Activated T-helper 1 cell treated with anti-CD3 and anti-CD28 coated beads, Interleukin-12 subunit alpha, Interleukin-12 subunit beta, Interleukin-2, Interleukin-4 antibody, amounts not matched to agents 30 ng/mL and 10 ng/mL and 1 ng/mL, durations not matched to agents 14 hours and 24 hours and 36 hours (primary cell): ENCODE measurements at regions of chr9 and their contacts with region 1.

Region 1: GRCh38 chr9:20622330-20623020 is at the start of gene MLLT3:
- DNase-seq: peak; percentile 97
- H3K4me3 Mint-ChIP-seq: peak within 1 kb of the TSS; percentile 88
- H3K27ac Mint-ChIP-seq: peak within 1 kb of the TSS; percentile 99
- H3K4me1 Mint-ChIP-seq: peaks cover 52% of the 10 kb centered on the region
- H3K27me3 Mint-ChIP-seq: no peaks in the 10 kb centered on the region
- total RNA-seq, gene MLLT3: 33.8 and 36.4 TPM in 2 replicates

Region 2: DNA sequence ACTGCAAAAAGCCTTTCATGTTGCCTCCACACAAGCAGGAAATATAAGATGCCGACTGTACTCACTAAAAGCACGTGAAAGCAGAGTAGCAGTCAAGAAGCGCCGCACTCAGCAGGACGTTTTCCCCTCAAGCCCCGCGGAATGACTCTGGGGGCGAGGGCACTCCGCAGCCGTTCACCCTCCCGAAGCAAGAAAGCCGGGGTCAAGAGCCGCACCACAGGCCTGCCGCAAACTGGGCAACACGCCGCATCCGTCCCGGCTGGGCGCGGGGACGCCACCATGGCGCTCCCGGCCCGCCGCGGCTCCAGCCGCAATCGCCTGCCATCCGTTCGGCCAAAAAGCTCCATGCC is 1242.8 kb before region 1 on chr9:
- intact Hi-C with region 1: loop called (anchors 5 kb)
- DNase-seq: no peak
- H3K4me3 Mint-ChIP-seq: peak overlapping the region; percentile 98
- H3K27ac Mint-ChIP-seq: peak overlapping the region; percentile 98
- H3K4me1 Mint-ChIP-seq: peaks cover 61% of the 10 kb centered on the region
- H3K27me3 Mint-ChIP-seq: no peaks in the 10 kb centered on the region

Region 3: GRCh38 chr9:19999491-20000057 is 622.9 kb before region 1 on chr9:
- intact Hi-C with region 1: loop called (anchors 1 kb)
- DNase-seq: peak; percentile 62
- H3K4me3 Mint-ChIP-seq: peak overlapping the region; percentile 63
- H3K27ac Mint-ChIP-seq: peak overlapping the region; percentile 99
- H3K4me1 Mint-ChIP-seq: peaks cover 66% of the 10 kb centered on the region
- H3K27me3 Mint-ChIP-seq: no peaks in the 10 kb centered on the region

Region 4: DNA sequence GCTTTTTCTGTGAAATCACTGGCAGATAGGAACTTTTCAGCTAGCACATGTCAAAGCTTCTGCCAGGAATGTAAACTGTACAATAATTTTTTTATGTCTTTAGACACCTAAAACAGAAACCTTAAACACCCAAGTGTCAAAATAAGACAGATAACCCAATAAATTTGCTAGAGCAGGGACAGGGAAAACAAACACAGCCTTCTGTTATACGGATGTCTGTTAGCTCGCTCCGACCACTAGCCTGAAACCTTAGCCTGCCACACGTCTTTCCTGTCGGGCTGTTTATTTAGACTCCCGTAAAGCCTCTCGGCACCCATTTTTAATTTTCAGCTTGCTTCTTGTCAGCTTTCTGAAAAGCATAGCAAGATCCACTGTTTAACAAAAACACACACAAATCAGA is 478.3 kb before region 1 on chr9:
- intact Hi-C with region 1: no loop called
- DNase-seq: no peak
- H3K4me3 Mint-ChIP-seq: peak overlapping the region; percentile 41
- H3K27ac Mint-ChIP-seq: no peak overlapping the region
- H3K4me1 Mint-ChIP-seq: peaks cover 15% of the 10 kb centered on the region
- H3K27me3 Mint-ChIP-seq: no peaks in the 10 kb centered on the region

Region 5: DNA sequence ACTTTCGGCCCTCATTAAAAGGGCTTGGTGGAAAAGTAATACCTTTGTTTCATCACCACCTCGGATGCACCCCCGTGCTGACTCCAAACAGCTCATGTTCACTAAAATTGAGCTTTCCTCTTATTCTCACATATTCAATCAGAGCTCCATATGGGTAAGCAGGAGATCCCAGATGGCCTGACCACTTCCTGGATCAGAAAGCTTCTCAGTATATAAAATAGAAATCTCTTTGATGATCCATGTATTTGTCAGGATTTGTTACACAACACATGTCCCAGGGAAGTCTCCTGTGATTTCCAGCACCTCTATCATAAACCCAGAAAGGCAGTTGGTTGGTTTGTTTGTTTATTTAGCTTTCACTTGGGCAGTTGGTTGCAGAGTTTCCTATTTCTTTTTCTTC is 402.2 kb before region 1 on chr9:
- intact Hi-C with region 1: no loop called
- DNase-seq: no peak
- H3K4me3 Mint-ChIP-seq: no peak overlapping the region
- H3K27ac Mint-ChIP-seq: no peak overlapping the region
- H3K4me1 Mint-ChIP-seq: peaks cover 18% of the 10 kb centered on the region
- H3K27me3 Mint-ChIP-seq: peaks cover 5% of the 10 kb centered on the region

Region 6: DNA sequence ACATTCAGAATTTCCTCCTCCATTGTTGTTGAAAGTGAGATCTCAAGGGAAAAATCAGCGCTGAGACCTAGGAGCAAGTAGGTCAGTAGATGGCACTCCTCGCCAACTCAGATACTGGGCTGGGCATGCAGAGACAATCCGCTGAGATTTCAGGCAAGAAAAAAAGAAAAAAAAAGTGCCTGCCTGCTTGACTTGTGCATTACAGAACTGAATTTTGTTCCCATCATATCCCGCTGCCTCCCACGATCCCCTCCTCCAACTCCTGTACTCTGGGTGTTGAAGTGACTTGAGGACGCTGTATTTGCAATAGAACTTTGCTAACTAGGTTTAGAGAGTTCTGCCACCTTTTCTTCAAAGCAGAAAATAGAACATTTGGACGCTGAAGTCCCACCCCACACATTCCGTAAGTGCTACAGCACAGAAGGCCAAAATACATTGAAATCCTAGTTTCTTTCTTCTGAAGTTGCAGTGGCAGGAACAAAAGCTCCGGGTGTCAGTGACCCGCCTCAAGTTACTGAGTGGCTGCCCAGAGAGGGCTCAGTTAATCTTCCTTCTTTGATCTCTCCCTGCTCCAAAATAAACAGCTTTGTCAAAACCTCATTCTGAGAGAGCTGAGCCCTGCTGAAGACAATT is 266.0 kb before region 1 on chr9:
- intact Hi-C with region 1: loop called (anchors 1 kb)
- DNase-seq: peak; percentile 29
- H3K4me3 Mint-ChIP-seq: no peak overlapping the region
- H3K27ac Mint-ChIP-seq: peak overlapping the region; percentile 40
- H3K4me1 Mint-ChIP-seq: peaks cover 86% of the 10 kb centered on the region
- H3K27me3 Mint-ChIP-seq: no peaks in the 10 kb centered on the region

Region 7: DNA sequence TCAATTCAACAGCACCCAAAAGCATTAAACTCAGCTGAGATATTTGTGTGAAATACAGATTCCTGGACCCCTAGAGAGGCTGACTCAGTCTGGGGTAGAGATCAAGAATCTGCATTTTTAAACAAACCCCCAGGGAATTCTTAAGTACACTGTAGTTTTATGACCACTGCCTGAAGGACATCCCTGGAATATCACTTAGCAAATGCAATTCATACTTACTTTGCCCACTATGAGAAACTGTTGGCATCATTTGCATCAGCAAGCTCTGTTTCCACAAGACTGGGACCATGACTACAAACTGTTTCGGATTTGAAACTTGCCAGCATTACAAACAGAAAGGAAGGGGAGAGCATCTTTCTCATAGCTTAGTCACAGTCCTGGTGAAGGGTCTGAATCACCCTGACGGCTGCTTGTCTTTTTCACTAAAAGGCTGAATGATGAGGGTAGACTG is 63.9 kb before region 1 on chr9:
- intact Hi-C with region 1: loop called (anchors 1 kb)
- DNase-seq: peak; percentile 18
- H3K4me3 Mint-ChIP-seq: peak overlapping the region; percentile 20
- H3K27ac Mint-ChIP-seq: peak overlapping the region; percentile 47
- H3K4me1 Mint-ChIP-seq: peaks cover 83% of the 10 kb centered on the region
- H3K27me3 Mint-ChIP-seq: no peaks in the 10 kb centered on the region

Region 8: DNA sequence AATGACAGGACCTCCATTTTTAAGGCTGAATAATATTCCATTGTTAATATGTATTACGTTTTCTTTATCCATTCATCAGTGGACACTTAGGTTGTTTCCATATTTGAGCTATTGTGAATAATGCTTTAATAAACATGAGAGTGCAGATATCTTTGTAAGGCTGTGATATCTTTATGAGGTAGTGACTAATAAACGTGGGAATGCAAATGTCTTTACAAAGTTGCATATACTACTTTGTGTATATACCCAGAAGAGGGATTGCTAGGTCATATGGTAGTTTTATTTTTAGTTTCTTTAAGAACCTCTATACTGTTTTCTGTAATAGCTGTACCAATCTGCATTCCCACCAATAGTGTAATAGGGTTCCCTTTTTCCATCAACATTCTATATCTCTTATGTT is 210.3 kb after region 1 on chr9:
- intact Hi-C with region 1: no loop called
- DNase-seq: no peak
- H3K4me3 Mint-ChIP-seq: no peak overlapping the region
- H3K27ac Mint-ChIP-seq: no peak overlapping the region
- H3K4me1 Mint-ChIP-seq: peaks cover 7% of the 10 kb centered on the region
- H3K27me3 Mint-ChIP-seq: no peaks in the 10 kb centered on the region

Region 9: DNA sequence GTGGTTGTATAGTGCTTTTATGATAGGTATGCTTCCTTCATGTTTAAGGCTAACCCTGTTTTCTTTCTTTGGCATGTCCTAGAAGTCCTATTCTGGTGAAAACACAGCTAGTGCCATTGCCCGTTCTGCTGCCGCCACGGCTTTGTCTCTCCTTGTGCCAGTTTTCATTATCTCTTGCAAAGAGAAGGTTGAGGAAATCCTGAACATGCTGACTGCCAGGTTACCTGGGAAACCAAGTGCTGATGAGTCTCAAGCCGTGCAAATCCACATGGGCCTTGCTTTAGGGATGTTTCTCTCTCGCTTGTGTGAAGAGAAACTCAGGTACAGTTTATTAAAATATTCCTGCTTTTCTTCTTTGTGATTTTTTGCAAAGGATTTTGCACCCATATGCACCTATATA is 306.8 kb after region 1 on chr9:
- intact Hi-C with region 1: loop called (anchors 5 kb)
- DNase-seq: no peak
- H3K4me3 Mint-ChIP-seq: no peak overlapping the region
- H3K27ac Mint-ChIP-seq: no peak overlapping the region
- H3K4me1 Mint-ChIP-seq: peaks cover 30% of the 10 kb centered on the region
- H3K27me3 Mint-ChIP-seq: peaks cover 1% of the 10 kb centered on the region